ENCODE measurements at regions of chr12 and their contacts with region 1.

Region 1: GRCh38 chr12:6688999-6689882 is at the start of gene ZNF384:
- DNase-seq: peak; percentile 99
- H3K4me3 ChIP-seq: peak within 1 kb of the TSS; percentile 86
- H3K27ac ChIP-seq: peak within 1 kb of the TSS; percentile 100
- H3K4me1 ChIP-seq: peaks cover 29% of the 10 kb centered on the region
- H3K27me3 ChIP-seq: no peaks in the 10 kb centered on the region
- CTCF ChIP-seq: no peak
- total RNA-seq, gene ZNF384: 88.8 and 92.5 TPM in 2 replicates

Region 2: GRCh38 chr12:6140651-6141447 is 548.4 kb before region 1 on chr12:
- CTCF ChIA-PET with region 1: no interaction called
- POLR2A ChIA-PET with region 1: no interaction called
- intact Hi-C with region 1: no loop called
- DNase-seq: no peak
- H3K4me3 ChIP-seq: no peak overlapping the region
- H3K27ac ChIP-seq: no peak overlapping the region
- H3K4me1 ChIP-seq: no peaks in the 10 kb centered on the region
- H3K27me3 ChIP-seq: no peaks in the 10 kb centered on the region
- CTCF ChIP-seq: no peak

Region 3: DNA sequence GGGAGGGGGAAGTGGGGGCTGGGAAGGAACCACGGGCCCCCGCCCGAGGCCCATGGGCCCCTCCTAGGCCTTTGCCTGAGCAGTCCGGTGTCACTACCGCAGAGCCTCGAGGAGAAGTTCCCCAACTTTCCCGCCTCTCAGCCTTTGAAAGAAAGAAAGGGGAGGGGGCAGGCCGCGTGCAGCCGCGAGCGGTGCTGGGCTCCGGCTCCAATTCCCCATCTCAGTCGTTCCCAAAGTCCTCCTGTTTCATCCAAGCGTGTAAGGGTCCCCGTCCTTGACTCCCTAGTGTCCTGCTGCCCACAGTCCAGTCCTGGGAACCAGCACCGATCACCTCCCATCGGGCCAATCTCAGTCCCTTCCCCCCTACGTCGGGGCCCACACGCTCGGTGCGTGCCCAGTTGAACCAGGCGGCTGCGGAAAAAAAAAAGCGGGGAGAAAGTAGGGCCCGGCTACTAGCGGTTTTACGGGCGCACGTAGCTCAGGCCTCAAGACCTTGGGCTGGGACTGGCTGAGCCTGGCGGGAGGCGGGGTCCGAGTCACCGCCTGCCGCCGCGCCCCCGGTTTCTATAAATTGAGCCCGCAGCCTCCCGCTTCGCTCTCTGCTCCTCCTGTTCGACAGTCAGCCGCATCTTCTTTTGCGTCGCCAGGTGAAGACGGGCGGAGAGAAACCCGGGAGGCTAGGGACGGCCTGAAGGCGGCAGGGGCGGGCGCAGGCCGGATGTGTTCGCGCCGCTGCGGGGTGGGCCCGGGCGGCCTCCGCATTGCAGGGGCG is 155.1 kb before region 1 on chr12 and contains the start of gene GAPDH:
- CTCF ChIA-PET with region 1: no interaction called
- POLR2A ChIA-PET with region 1: interaction called, 18 read pairs
- intact Hi-C with region 1: no loop called
- DNase-seq: peak; percentile 99
- H3K4me3 ChIP-seq: peak within 1 kb of the TSS; percentile 84
- H3K27ac ChIP-seq: peak within 1 kb of the TSS; percentile 96
- H3K4me1 ChIP-seq: peaks cover 40% of the 10 kb centered on the region
- H3K27me3 ChIP-seq: no peaks in the 10 kb centered on the region
- CTCF ChIP-seq: no peak
- total RNA-seq, gene GAPDH: 5,579 and 5,657 TPM in 2 replicates

Region 4: GRCh38 chr12:6607751-6608591 is 81.3 kb before region 1 on chr12:
- CTCF ChIA-PET with region 1: interaction called, 9 read pairs
- POLR2A ChIA-PET with region 1: no interaction called
- intact Hi-C with region 1: loop called (anchors 2 kb)
- DNase-seq: peak; percentile 83
- H3K4me3 ChIP-seq: no peak overlapping the region
- H3K27ac ChIP-seq: peak overlapping the region; percentile 74
- H3K4me1 ChIP-seq: peaks cover 55% of the 10 kb centered on the region
- H3K27me3 ChIP-seq: no peaks in the 10 kb centered on the region
- CTCF ChIP-seq: no peak

Region 5: DNA sequence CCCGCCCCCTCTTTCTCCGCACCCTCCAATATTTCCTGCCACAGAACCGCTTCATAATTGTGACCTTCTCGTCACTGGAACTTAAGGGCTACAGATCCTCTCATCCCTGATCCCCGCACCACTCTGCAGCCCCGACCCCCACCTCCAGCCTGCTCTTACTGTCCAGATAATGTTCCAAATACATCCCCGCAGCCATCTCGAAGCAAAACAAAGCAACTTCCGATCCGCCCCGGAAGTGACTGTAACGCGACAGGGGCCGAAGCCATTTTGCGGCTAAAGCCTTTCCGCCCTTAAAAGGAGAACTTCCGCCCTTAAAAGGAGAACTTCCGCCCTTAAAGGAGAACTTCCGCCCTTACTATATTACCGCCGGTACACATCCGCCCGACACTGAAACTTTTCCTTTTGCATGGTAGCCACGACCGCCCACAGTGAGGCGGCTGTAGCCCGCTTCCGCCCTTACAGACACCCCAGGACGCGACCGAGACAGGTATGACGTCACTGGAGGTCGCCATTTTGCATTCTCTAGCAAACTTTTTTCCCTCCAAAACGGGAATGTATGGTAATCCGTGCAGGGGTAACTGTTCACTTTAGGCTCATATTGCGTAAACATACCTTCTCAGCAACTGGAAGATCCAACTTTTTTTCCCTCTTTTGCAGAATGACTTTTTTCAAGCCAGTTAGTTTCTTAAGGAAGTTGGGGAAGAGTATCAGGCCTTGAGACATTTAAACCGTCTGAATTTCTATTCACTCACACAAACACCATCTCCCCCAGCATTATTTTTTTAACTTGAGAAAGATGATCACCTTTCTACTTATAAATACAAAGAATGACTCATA is 26.1 kb before region 1 on chr12 and contains the start of gene ING4:
- CTCF ChIA-PET with region 1: interaction called, 5 read pairs
- POLR2A ChIA-PET with region 1: interaction called, 6 read pairs
- intact Hi-C with region 1: loop called (anchors 1 kb)
- DNase-seq: peak; percentile 100
- H3K4me3 ChIP-seq: peak within 1 kb of the TSS; percentile 88
- H3K27ac ChIP-seq: peak within 1 kb of the TSS; percentile 94
- H3K4me1 ChIP-seq: peaks cover 11% of the 10 kb centered on the region
- H3K27me3 ChIP-seq: no peaks in the 10 kb centered on the region
- CTCF ChIP-seq: no peak
- total RNA-seq, gene ING4: 21.4 and 25.5 TPM in 2 replicates

Region 6: GRCh38 chr12:6764011-6764828 is 75.0 kb after region 1 on chr12:
- CTCF ChIA-PET with region 1: interaction called, 10 read pairs
- POLR2A ChIA-PET with region 1: no interaction called
- intact Hi-C with region 1: no loop called
- DNase-seq: peak; percentile 100
- H3K4me3 ChIP-seq: peak overlapping the region; percentile 97
- H3K27ac ChIP-seq: peak overlapping the region; percentile 89
- H3K4me1 ChIP-seq: peaks cover 36% of the 10 kb centered on the region
- H3K27me3 ChIP-seq: no peaks in the 10 kb centered on the region
- CTCF ChIP-seq: no peak

Region 7: GRCh38 chr12:6904280-6905278 is 215.3 kb after region 1 on chr12 and contains the start of gene LRRC23:
- CTCF ChIA-PET with region 1: no interaction called
- POLR2A ChIA-PET with region 1: no interaction called
- intact Hi-C with region 1: no loop called
- DNase-seq: peak; percentile 98
- H3K4me3 ChIP-seq: peak within 1 kb of the TSS; percentile 56
- H3K27ac ChIP-seq: peak within 1 kb of the TSS; percentile 63
- H3K4me1 ChIP-seq: peaks cover 7% of the 10 kb centered on the region
- H3K27me3 ChIP-seq: no peaks in the 10 kb centered on the region
- CTCF ChIP-seq: no peak
- total RNA-seq, gene LRRC23: 7.7 and 13.6 TPM in 2 replicates